Activated B cell treated with CpG ODN at 0.5 μM for 24 hours (primary cell): ENCODE measurements at regions of chr19 and their contacts with region 1.

Region 1: GRCh38 chr19:57103573-57104277 is 16.1 kb upstream of the USP29 start:
- DNase-seq: peak; percentile 27
- ATAC-seq: peak; percentile 82
- H3K4me3 Mint-ChIP-seq: peak overlapping the region; percentile 57
- H3K27ac Mint-ChIP-seq: peak overlapping the region; percentile 53
- H3K4me1 Mint-ChIP-seq: peaks cover 5% of the 10 kb centered on the region
- H3K27me3 Mint-ChIP-seq: peaks cover 11% of the 10 kb centered on the region
- CTCF ChIP-seq: no peak

Region 2: GRCh38 chr19:57746580-57747471 is 643.1 kb after region 1 on chr19 and contains the start of gene ZNF776:
- CTCF ChIA-PET with region 1: no interaction called
- POLR2A ChIA-PET with region 1: no interaction called
- intact Hi-C with region 1: loop called (anchors 5 kb)
- DNase-seq: peak; percentile 54
- ATAC-seq: peak; percentile 95
- H3K4me3 Mint-ChIP-seq: peak within 1 kb of the TSS; percentile 91
- H3K27ac Mint-ChIP-seq: peak within 1 kb of the TSS; percentile 87
- H3K4me1 Mint-ChIP-seq: peaks cover 42% of the 10 kb centered on the region
- H3K27me3 Mint-ChIP-seq: no peaks in the 10 kb centered on the region
- CTCF ChIP-seq: no peak
- total RNA-seq, gene ZNF776: 26.5 and 29.9 TPM in 2 replicates

Region 3: GRCh38 chr19:57903618-57904184 is 800.0 kb after region 1 on chr19:
- CTCF ChIA-PET with region 1: interaction called, 3 read pairs
- POLR2A ChIA-PET with region 1: no interaction called
- intact Hi-C with region 1: loop called (anchors 10 kb)
- DNase-seq: no peak
- ATAC-seq: no peak
- H3K4me3 Mint-ChIP-seq: no peak overlapping the region
- H3K27ac Mint-ChIP-seq: peak overlapping the region; percentile 3
- H3K4me1 Mint-ChIP-seq: peaks cover 18% of the 10 kb centered on the region
- H3K27me3 Mint-ChIP-seq: no peaks in the 10 kb centered on the region
- CTCF ChIP-seq: no peak